Activated B cell treated with CpG ODN at 0.5 μM for 24 hours (primary cell): ENCODE measurements at regions of chr2 and their contacts with region 1.

Region 1: GRCh38 chr2:239369631-239370161 is 31.1 kb downstream of the HDAC4 start:
- DNase-seq: peak; percentile 65
- ATAC-seq: peak; percentile 91
- H3K4me3 Mint-ChIP-seq: peak overlapping the region; percentile 74
- H3K27ac Mint-ChIP-seq: peak overlapping the region; percentile 89
- H3K4me1 Mint-ChIP-seq: peaks cover 8% of the 10 kb centered on the region
- H3K27me3 Mint-ChIP-seq: no peaks in the 10 kb centered on the region
- CTCF ChIP-seq: no peak

Region 2: DNA sequence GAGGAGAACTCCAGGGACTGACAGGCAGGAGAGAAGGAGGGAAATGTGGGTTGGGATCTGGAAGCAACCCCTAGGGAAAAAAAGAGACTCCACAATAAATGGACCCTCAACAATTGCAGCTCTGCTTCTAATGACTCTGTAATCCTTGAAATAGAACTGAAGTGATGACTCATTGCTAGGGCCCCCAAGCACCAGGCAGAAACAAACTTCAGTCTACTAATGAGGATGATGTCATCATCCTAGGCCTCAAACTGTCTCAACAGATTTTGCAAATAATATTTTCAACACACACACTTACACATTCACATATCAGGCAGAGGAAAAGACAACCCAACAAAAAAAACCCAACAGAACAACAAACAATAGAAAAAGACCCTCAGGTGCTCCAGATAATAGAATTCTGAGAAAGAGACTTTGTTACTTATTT is 112.2 kb before region 1 on chr2:
- CTCF ChIA-PET with region 1: no interaction called
- POLR2A ChIA-PET with region 1: no interaction called
- intact Hi-C with region 1: no loop called
- DNase-seq: no peak
- ATAC-seq: no peak
- H3K4me3 Mint-ChIP-seq: no peak overlapping the region
- H3K27ac Mint-ChIP-seq: no peak overlapping the region
- H3K4me1 Mint-ChIP-seq: peaks cover 66% of the 10 kb centered on the region
- H3K27me3 Mint-ChIP-seq: peaks cover 24% of the 10 kb centered on the region
- CTCF ChIP-seq: no peak

Region 3: DNA sequence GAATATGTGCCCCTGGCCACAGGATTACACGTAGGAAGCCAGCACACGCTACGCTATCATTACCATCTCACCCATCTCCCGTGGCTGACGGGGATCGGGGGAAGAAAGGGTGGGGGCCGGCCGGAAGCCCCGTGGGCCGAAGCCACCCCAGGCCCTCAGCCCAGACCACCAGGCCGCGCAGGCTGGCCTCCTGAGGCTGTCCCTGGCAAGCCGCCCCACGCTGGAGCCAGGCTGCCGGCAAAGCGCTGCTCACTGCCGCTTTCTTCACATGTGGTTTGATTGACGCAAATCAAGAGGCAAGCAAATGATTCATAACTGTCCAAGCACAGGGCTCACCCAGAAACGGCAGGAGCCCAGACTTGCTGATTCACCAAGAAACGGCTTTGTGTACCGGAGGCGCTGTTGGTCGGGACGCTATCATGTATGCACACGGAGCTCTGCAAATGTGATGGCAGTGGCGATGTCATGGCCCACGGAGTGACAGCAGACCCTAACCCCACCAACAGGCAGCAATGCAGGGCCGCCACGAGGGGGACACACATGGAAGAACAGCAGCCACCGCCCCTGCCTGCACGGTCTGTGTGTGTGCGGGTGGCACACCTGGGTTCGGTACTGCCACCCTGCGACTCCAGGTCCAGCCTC is 94.5 kb before region 1 on chr2:
- CTCF ChIA-PET with region 1: interaction called, 3 read pairs
- POLR2A ChIA-PET with region 1: no interaction called
- intact Hi-C with region 1: loop called (anchors 1 kb)
- DNase-seq: peak; percentile 27
- ATAC-seq: peak; percentile 92
- H3K4me3 Mint-ChIP-seq: peak overlapping the region; percentile 52
- H3K27ac Mint-ChIP-seq: no peak overlapping the region
- H3K4me1 Mint-ChIP-seq: peaks cover 17% of the 10 kb centered on the region
- H3K27me3 Mint-ChIP-seq: peaks cover 50% of the 10 kb centered on the region
- CTCF ChIP-seq: no peak

Region 4: GRCh38 chr2:239303711-239304532 is 65.8 kb before region 1 on chr2:
- CTCF ChIA-PET with region 1: no interaction called
- POLR2A ChIA-PET with region 1: interaction called, 14 read pairs
- intact Hi-C with region 1: loop called (anchors 1 kb)
- DNase-seq: peak; percentile 13
- ATAC-seq: peak; percentile 82
- H3K4me3 Mint-ChIP-seq: peak overlapping the region; percentile 29
- H3K27ac Mint-ChIP-seq: peak overlapping the region; percentile 11
- H3K4me1 Mint-ChIP-seq: peaks cover 44% of the 10 kb centered on the region
- H3K27me3 Mint-ChIP-seq: no peaks in the 10 kb centered on the region
- CTCF ChIP-seq: no peak

Region 5: DNA sequence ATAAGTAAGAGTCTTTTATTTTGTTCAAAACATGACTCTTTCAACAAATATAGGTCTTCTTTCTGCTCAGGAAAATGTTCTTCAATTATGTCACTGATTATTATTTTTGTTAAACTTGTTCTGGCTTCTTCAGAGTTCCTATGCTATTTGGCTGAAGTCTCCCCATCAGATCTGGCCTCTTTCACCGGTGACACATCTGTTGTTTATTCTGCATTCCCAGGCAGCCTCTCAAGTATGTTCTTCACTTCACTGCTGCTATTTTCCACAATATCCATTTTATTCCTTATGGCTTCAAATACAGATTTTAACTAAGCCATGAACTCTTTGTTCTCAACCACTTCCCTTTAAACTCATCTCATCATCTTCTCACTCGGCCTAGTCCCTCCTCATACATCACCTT is 14.6 kb before region 1 on chr2:
- CTCF ChIA-PET with region 1: no interaction called
- POLR2A ChIA-PET with region 1: interaction called, 4 read pairs
- intact Hi-C with region 1: loop called (anchors 2 kb)
- DNase-seq: no peak
- ATAC-seq: no peak
- H3K4me3 Mint-ChIP-seq: no peak overlapping the region
- H3K27ac Mint-ChIP-seq: no peak overlapping the region
- H3K4me1 Mint-ChIP-seq: no peaks in the 10 kb centered on the region
- H3K27me3 Mint-ChIP-seq: no peaks in the 10 kb centered on the region
- CTCF ChIP-seq: no peak